ENCODE measurements at regions of chr6 and their contacts with region 1.

Region 1: DNA sequence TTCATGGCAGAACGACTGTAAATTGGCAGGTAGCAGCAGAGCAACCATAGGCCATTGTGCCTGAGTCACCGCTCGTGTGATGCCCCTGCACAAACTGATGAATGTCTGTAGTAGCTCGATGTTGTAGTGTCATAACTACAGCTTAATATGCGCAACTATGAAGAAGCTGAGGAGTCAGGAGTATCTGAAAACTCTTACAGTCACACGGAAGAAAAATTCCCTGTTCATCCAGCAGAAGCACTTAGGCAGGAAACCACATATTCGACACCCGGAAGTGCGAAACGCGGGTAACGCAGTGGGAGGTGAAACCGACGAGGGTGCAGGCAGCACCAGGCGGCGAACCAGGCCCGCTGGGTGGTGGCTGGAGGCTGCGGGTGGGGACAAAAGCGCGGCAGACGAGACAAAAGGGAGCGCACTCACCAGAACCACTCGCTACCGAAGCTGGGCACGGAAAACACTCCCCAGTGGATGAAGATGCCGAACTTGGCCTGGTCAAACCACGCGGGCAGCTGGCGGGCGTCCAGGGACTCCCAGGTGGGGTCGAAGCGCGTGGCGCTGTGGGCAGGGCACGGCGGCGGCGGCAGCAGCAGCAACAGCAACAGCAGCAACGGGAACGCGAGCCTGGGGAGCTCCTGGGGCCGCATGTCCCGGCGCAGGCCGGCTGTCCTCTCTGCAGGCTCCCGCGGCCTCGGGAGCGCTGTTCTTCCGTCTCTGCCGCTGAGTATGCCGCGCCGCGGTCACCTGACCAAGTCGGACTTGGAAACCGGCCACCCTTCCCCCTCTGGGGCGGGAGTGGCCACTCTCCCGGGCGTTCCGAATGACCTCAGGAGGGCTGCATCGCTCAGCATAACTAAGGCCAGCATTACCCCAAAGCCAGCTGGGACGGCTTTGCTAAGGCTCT is at the start of gene FUCA2:
- DNase-seq: peak; percentile 35 to 72 (median 63)
- ATAC-seq: peak; percentile 82
- H3K4me3 ChIP-seq: peak within 1 kb of the TSS; percentile 74
- H3K4me3 Mint-ChIP-seq: peak within 1 kb of the TSS; percentile 87 to 97 (median 92)
- H3K27ac ChIP-seq: peak within 1 kb of the TSS; percentile 69
- H3K27ac Mint-ChIP-seq: peak within 1 kb of the TSS; percentile 79 to 97 (median 89)
- H3K4me1 ChIP-seq: peaks cover 0 to 4% of the 10 kb centered on the region in 2 donors
- H3K4me1 Mint-ChIP-seq: peaks cover 14 to 43% (median 19%) of the 10 kb centered on the region in 7 donors
- H3K27me3 ChIP-seq: no peaks in the 10 kb centered on the region
- H3K27me3 Mint-ChIP-seq: no peaks in the 10 kb centered on the region
- total RNA-seq, gene FUCA2: 5.3 to 14.9 (median 6.7) TPM

Region 2: GRCh38 chr6:143060354-143060805 is 450.9 kb before region 1 on chr6:
- CTCF ChIA-PET with region 1: no interaction called
- POLR2A ChIA-PET with region 1: no interaction called
- intact Hi-C with region 1: loop called in 1 of 2 experiments (anchors 10 kb)
- DNase-seq: peak; percentile 63 to 82 (median 72)
- ATAC-seq: peak; percentile 85
- H3K4me3 ChIP-seq: peak overlapping the region; percentile 73
- H3K4me3 Mint-ChIP-seq: peak overlapping the region; percentile 88 to 98 (median 94)
- H3K27ac ChIP-seq: peak overlapping the region; percentile 79
- H3K27ac Mint-ChIP-seq: peak overlapping the region; percentile 92 to 98 (median 96)
- H3K4me1 ChIP-seq: peaks cover 8% of the 10 kb centered on the region in 2 donors
- H3K4me1 Mint-ChIP-seq: peaks cover 16 to 34% (median 28%) of the 10 kb centered on the region in 7 donors
- H3K27me3 ChIP-seq: no peaks in the 10 kb centered on the region
- H3K27me3 Mint-ChIP-seq: no peaks in the 10 kb centered on the region

Region 3: DNA sequence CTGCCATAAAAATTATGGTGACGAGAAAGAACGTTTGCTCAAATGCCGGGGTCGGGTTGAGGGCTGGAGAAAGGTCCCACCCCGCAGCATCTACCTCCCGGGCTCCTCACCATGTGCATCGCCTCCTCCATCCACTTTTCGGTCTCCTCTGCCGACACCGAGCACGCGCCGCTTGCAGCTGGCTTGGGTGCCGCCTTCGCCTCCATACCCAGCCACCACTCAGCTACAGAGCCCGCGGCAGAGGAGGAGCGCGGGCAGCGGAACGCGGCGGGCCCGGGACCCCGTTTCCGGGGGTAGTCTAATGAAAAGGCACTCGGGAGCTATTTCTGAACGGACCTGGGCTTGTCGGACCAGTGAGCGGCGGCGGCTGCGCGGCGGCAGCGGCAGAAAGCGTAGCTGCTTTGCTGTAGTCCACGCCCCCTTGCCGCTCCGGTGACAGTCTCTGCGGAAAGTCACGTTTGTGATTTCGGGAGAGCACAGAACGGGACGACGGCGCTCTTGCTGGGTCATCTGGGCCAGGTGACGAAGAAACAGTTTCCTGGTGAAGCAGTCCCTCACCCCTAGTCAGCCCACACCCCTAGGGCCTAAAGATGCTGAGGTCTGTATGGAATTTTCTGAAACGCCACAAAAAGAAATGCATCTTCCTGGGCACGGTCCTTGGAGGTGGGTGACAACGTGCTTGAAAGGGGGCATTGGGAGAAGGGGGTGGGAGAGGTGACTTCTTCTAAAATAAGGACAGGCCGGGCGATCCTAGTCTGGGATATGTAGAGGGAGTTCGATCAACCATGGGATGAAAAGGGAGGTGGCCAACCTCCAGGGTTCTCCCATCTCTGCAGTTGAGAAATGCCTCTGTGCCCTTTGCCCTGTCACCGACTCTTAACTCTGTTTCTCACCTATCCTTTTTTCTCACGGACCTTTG is 60.5 kb before region 1 on chr6 and contains the starts of genes ADAT2 and PEX3:
- CTCF ChIA-PET with region 1: no interaction called
- POLR2A ChIA-PET with region 1: interaction called, 13 read pairs
- intact Hi-C with region 1: loop called (anchors 1 kb)
- DNase-seq: peak; percentile 87 to 95 (median 94)
- ATAC-seq: peak; percentile 98
- H3K4me3 ChIP-seq: peak within 1 kb of the TSS; percentile 89
- H3K4me3 Mint-ChIP-seq: peak within 1 kb of the TSS; percentile 84 to 100 (median 99)
- H3K27ac ChIP-seq: peak within 1 kb of the TSS; percentile 80
- H3K27ac Mint-ChIP-seq: peak within 1 kb of the TSS; percentile 93 to 99 (median 96)
- H3K4me1 ChIP-seq: peaks cover 14 to 18% of the 10 kb centered on the region in 2 donors
- H3K4me1 Mint-ChIP-seq: peaks cover 20 to 61% (median 49%) of the 10 kb centered on the region in 7 donors
- H3K27me3 ChIP-seq: no peaks in the 10 kb centered on the region
- H3K27me3 Mint-ChIP-seq: no peaks in the 10 kb centered on the region
- total RNA-seq, gene ADAT2: 18.4 to 25.8 (median 20.8) TPM
- total RNA-seq, gene PEX3: 10.9 to 28.8 (median 19.1) TPM

Region 4: DNA sequence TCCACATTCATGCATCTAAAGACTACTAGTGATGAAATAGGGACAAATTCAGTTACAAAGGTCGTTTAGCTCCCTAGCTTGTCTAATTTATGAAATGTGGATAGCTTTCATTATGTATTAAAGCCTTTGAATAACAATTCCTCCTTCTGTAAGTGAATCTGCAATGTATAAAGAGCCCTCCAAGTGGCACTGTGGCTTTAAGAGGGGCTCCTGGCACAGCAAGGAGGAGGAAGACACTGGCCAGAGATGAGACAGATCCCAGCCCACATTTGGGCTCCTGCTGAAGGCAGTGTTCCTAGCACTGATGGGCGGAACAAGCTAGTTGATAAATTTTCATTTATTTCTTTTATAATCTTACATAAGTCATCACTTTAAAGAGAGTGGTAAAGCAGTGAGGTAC is 17.9 kb after region 1 on chr6:
- CTCF ChIA-PET with region 1: interaction called, 4 read pairs
- POLR2A ChIA-PET with region 1: interaction called, 3 read pairs
- intact Hi-C with region 1: loop called in 1 of 2 experiments (anchors 2 kb)
- DNase-seq: no peak
- ATAC-seq: peak; percentile 47
- H3K4me3 ChIP-seq: no peak overlapping the region
- H3K4me3 Mint-ChIP-seq: peak overlapping the region in 1 of 10 donors; percentile 16
- H3K27ac ChIP-seq: no peak overlapping the region
- H3K27ac Mint-ChIP-seq: peak overlapping the region; percentile 44 to 95 (median 92)
- H3K4me1 ChIP-seq: peaks cover 14 to 15% of the 10 kb centered on the region in 2 donors
- H3K4me1 Mint-ChIP-seq: peaks cover 13 to 19% (median 15%) of the 10 kb centered on the region in 7 donors
- H3K27me3 ChIP-seq: no peaks in the 10 kb centered on the region
- H3K27me3 Mint-ChIP-seq: no peaks in the 10 kb centered on the region

Region 5: DNA sequence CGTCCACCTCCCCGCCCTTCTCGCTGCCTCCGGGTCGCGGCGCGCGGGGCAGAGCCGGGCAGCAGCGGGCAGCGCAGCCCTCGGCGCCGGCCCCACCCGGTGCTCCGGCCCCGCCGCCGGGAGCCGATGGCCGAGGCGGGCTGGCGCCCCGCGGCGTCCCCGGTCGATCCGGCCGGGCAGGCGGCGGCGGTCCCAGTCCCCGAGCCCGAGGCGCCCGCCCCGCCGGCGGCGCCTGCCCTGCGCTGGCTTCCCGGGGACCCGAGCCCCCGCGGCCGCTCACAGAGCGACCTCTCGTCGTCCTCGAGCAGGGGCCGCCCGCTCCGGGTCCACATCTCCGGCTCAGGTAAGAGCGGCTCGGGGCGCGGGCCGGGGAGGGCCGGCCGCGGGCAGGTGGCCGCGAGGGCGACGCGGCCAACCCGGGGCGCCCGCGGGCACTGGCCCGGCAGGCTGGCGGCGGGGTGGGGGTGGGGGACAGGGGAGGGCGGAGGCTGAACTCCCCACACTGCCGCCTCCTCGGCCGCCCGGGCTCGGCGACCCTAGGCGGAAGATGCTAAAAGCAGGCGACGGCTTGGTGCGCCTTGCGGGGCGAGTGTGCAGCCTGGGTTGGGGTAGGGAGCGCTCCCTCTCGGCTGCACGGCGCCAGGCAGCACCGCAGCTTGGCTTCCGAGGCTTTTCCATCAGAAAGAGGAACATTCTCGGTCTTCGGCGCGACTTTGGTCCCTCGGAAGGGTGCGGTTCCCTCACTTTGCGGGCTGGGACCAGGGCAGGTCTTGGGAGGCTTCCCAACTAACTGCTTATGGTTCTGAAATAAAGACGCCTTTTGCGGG is 25.8 kb after region 1 on chr6:
- CTCF ChIA-PET with region 1: interaction called, 5 read pairs
- POLR2A ChIA-PET with region 1: interaction called, 3 read pairs
- intact Hi-C with region 1: loop called (anchors 1 to 2 kb)
- DNase-seq: peak; percentile 37 to 69 (median 57)
- ATAC-seq: peak; percentile 83
- H3K4me3 ChIP-seq: peak overlapping the region; percentile 74
- H3K4me3 Mint-ChIP-seq: peak overlapping the region; percentile 81 to 92 (median 84)
- H3K27ac ChIP-seq: peak overlapping the region; percentile 60
- H3K27ac Mint-ChIP-seq: peak overlapping the region in 7 of 9 donors; percentile 59 to 89 (median 76)
- H3K4me1 ChIP-seq: peaks cover 27 to 28% of the 10 kb centered on the region in 2 donors
- H3K4me1 Mint-ChIP-seq: peaks cover 17 to 47% (median 37%) of the 10 kb centered on the region in 7 donors
- H3K27me3 ChIP-seq: no peaks in the 10 kb centered on the region
- H3K27me3 Mint-ChIP-seq: no peaks in the 10 kb centered on the region

Region 6: GRCh38 chr6:143549221-143549941 is 38.1 kb after region 1 on chr6:
- CTCF ChIA-PET with region 1: interaction called, 3 read pairs
- POLR2A ChIA-PET with region 1: no interaction called
- intact Hi-C with region 1: loop called in 1 of 2 experiments (anchors 2 kb)
- DNase-seq: peak in 1 of 9 donors; percentile 45
- ATAC-seq: peak; percentile 47
- H3K4me3 ChIP-seq: no peak overlapping the region
- H3K4me3 Mint-ChIP-seq: peak overlapping the region in 3 of 10 donors; percentile 4 to 43 (median 10)
- H3K27ac ChIP-seq: no peak overlapping the region
- H3K27ac Mint-ChIP-seq: peak overlapping the region in 4 of 9 donors; percentile 20 to 66 (median 66)
- H3K4me1 ChIP-seq: peaks cover 43 to 71% of the 10 kb centered on the region in 2 donors
- H3K4me1 Mint-ChIP-seq: peaks cover 37 to 86% (median 73%) of the 10 kb centered on the region in 7 donors
- H3K27me3 ChIP-seq: no peaks in the 10 kb centered on the region
- H3K27me3 Mint-ChIP-seq: no peaks in the 10 kb centered on the region

Region 7: GRCh38 chr6:144013486-144013909 is 502.3 kb after region 1 on chr6:
- CTCF ChIA-PET with region 1: no interaction called
- POLR2A ChIA-PET with region 1: no interaction called
- intact Hi-C with region 1: loop called (anchors 1 kb)
- DNase-seq: peak; percentile 18 to 58 (median 45)
- ATAC-seq: peak; percentile 54
- H3K4me3 ChIP-seq: no peak overlapping the region
- H3K4me3 Mint-ChIP-seq: no peak overlapping the region
- H3K27ac ChIP-seq: no peak overlapping the region
- H3K27ac Mint-ChIP-seq: peak overlapping the region in 1 of 9 donors; percentile 9
- H3K4me1 ChIP-seq: no peaks in the 10 kb centered on the region
- H3K4me1 Mint-ChIP-seq: peaks cover 0 to 4% (median 0%) of the 10 kb centered on the region in 7 donors
- H3K27me3 ChIP-seq: peaks cover 0 to 6% of the 10 kb centered on the region in 2 donors
- H3K27me3 Mint-ChIP-seq: peaks cover 11 to 45% (median 28%) of the 10 kb centered on the region in 5 donors

Measured in naive thymus-derived CD4-positive, alpha-beta T cell (primary cell).